OCI-LY7 (cell line): ENCODE measurements at regions of chr2 and their contacts with region 1.

Region 1: DNA sequence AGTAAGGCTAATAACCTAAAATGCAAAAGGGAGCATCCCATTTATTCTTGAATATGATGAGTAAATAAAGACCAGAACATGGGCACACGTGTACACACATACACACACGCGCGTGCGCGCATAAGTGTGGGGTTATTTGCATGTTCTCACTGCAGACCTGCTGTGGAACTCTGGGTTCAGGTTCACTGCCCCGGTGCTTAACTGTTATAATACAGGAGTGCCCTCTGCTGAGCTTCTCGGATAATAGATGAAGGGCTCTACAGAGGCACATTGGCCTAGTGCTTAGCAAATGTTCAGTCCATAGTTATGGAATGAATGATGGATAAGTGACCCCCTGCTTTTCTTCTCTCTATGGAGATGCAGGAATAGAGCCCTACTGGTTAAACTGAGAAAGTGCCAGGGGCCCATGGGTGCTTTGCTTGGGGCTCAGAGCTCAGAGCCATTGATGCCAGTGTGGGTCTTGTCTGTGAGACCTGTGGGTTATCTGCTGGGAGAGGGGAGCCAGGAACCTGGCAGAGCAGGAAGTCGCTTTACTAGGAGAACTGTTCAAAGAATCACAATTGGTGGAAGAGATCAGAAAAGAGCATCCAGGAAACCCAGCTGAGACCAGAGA is 3.6 kb upstream of the ARL4C start:
- DNase-seq: peak; percentile 92
- H3K4me3 ChIP-seq: no peak overlapping the region
- H3K27ac ChIP-seq: no peak overlapping the region
- H3K4me1 ChIP-seq: peaks cover 19% of the 10 kb centered on the region
- CTCF ChIP-seq: peak; percentile 95

Region 2: GRCh38 chr2:233857511-233858141 is 642.9 kb before region 1 on chr2:
- CTCF ChIA-PET with region 1: no interaction called
- POLR2A ChIA-PET with region 1: no interaction called
- intact Hi-C with region 1: loop called (anchors 5 kb)
- DNase-seq: peak; percentile 37
- H3K4me3 ChIP-seq: no peak overlapping the region
- H3K27ac ChIP-seq: no peak overlapping the region
- H3K4me1 ChIP-seq: peaks cover 13% of the 10 kb centered on the region
- CTCF ChIP-seq: peak; percentile 96

Region 3: GRCh38 chr2:234288974-234289455 is 211.5 kb before region 1 on chr2:
- CTCF ChIA-PET with region 1: interaction called, 8 read pairs
- POLR2A ChIA-PET with region 1: interaction called, 60 read pairs
- intact Hi-C with region 1: loop called (anchors 1 kb)
- DNase-seq: peak; percentile 72
- H3K4me3 ChIP-seq: peak overlapping the region; percentile 4
- H3K27ac ChIP-seq: peak overlapping the region; percentile 97
- H3K4me1 ChIP-seq: peaks cover 56% of the 10 kb centered on the region
- CTCF ChIP-seq: peak; percentile 95